ENCODE measurements at regions of chr6 and their contacts with region 1.

Region 1: GRCh38 chr6:107800564-107801164 is 23.4 kb downstream of the SCML4 start:
- DNase-seq: peak; percentile 27
- H3K4me3 ChIP-seq: no peak overlapping the region
- H3K27ac ChIP-seq: no peak overlapping the region
- H3K4me1 ChIP-seq: peaks cover 4% of the 10 kb centered on the region
- H3K27me3 ChIP-seq: no peaks in the 10 kb centered on the region
- CTCF ChIP-seq: peak; percentile 61 to 85

Region 2: DNA sequence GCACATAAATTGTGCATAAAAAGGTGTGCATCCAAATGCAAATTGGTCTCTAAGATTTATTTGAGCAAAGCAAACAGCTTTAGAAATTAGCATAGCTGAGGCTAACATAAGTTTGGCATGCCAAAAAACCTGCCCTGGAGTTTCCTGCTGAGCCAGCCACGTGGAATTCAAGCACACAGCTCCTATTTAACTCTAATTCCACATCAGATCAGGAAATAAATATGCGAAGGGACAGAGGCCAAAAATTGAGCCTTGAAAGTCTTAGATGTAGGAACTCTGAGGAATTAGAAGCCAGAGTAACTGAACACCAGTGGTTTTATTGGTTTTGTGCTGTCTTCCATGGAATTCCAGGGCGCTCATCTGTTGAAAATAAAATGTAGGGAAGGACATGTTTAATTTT is 291.2 kb before region 1 on chr6:
- CTCF ChIA-PET with region 1: no interaction called
- dilution Hi-C with region 1: no loop called
- in situ Hi-C with region 1: no loop called
- intact Hi-C with region 1: no loop called
- DNase-seq: no peak
- H3K4me3 ChIP-seq: no peak overlapping the region
- H3K27ac ChIP-seq: no peak overlapping the region
- H3K4me1 ChIP-seq: no peaks in the 10 kb centered on the region
- H3K27me3 ChIP-seq: peaks cover 2% of the 10 kb centered on the region
- CTCF ChIP-seq: no peak

Region 3: DNA sequence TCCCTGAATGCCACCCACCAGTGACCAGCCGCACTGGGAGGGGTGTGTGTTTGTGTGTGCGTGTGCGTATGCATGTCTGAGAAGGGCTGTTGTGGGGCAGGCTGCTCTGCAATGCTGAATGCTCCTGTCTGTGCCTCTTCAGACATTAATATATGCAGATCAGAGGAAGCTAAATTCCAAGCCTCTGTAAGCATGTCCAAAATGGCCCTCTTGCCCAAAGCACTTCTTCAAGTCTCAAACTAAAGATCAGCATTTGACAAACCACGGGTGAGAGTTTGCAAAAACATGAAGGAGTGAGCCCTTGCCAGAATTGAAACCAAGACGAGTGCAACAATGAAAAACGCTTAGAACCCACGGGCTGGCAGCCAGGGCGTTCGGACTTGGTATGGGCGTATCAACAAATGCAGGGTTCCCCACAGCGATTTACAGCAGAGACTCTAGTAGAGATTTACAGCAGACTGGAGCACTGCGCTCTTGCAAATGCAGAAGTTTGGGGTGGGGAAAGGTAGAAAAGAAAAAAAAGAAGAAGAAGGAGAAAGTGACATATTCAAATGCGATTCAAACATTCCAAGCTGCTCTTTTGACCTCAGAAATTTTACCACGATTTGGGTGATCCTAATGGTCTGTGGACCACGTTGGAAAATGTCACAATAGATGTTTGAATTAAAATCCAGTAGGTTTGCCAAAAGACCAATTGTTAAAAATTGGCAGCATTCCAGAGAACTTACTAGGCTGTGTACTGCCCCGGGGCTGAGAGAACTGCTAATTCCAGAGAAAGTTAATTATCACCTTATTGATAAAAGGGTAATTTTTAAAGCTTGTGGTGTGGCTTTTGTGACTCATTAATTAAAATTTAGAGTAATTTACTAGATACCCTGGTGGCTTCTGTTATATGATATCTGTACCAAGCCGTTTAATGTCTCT is 19.9 kb after region 1 on chr6:
- CTCF ChIA-PET with region 1: no interaction called
- dilution Hi-C with region 1: no loop called
- in situ Hi-C with region 1: no loop called
- intact Hi-C with region 1: loop called (anchors 2 kb)
- DNase-seq: peak; percentile 24
- H3K4me3 ChIP-seq: peak overlapping the region; percentile 22 to 35 (median 25)
- H3K27ac ChIP-seq: no peak overlapping the region
- H3K4me1 ChIP-seq: peaks cover 31% of the 10 kb centered on the region
- H3K27me3 ChIP-seq: no peaks in the 10 kb centered on the region
- CTCF ChIP-seq: no peak

Measured in mammary epithelial cell (primary cell).